Gastrocnemius medialis (tissue), 4 donors: ENCODE measurements at regions of chr12 and their contacts with region 1.

Region 1: DNA sequence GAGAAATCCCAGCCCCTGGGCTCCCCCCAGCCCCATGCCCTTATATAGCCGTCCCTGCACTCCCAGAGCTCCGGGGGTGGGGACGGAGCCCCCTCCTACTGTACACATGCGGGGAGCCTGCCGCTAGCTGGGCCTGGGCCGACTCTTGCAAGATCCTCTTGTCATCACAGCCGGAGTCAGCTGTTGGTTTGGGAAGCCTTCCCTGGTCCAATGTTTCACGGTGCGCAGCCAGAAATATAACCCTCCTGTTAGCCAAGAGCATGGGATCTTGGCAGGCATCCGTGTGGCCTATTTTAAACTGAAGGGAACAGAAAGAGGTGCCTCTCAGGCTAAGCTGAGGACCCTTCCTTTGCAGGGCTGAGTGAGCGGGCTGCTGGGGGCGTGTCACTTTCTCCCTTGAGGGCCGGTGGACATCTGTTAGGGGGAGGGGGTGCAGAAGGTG is 175.3 kb downstream of the TSPAN9 start:
- DNase-seq: peak; percentile 95 to 98
- ATAC-seq: peak; percentile 73 to 85
- H3K4me3 ChIP-seq: peak overlapping the region in 1 of 4 donors; percentile 19
- H3K27ac ChIP-seq: peak overlapping the region; percentile 90 to 97 (median 94)
- H3K4me1 ChIP-seq: peaks cover 78 to 88% of the 10 kb centered on the region in 2 donors
- H3K27me3 ChIP-seq: no peaks in the 10 kb centered on the region
- CTCF ChIP-seq: no peak
- POLR2A ChIP-seq: peak in 1 of 2 donors; percentile 45

Region 2: DNA sequence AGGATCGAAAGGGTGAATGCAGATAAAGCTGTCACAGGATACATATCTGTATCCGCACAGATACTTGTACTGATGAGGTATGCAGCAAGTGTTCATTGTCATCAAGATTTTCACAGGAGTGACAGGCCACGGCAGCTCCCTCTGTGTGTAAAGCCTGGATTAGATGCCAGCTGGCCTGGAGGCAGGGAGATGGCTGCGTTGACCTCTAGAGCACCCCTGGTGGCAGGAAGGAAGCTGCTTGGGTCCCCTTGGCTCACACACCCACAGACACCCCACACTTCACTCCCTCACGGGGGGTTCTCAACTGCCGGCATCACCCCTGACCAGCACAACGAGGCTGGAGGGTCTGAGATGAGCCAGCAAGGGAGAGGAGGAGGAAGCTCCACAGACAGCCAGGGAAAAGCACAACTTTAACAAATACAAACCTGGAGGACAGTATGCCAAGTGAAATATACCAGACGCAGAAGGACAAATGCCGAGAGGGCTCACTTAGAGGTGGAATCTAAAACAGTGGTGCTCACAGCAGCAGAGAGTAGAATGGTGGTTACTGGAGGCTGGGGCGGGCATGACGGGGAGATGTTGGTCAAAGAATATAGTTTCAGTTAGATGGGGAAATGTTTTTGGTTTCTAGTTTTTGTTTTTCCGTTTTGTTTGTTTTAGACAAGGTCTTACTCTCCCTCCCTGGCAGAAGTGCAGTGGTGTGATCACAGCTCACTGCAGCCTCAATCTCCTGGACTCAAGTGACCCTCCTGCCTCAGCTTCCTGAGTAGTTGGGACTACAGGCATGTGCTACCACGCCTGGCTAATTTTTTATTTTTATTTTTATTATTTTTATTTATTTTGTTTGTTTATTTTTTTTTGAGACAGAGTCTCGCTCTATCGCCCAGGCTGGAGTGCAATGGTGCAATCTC is 247.6 kb before region 1 on chr12:
- in situ Hi-C with region 1: no loop called
- intact Hi-C with region 1: loop called (anchors 5 kb)
- DNase-seq: peak in 1 of 2 donors; percentile 58
- ATAC-seq: no peak
- H3K4me3 ChIP-seq: no peak overlapping the region
- H3K27ac ChIP-seq: peak overlapping the region; percentile 95 to 99 (median 97)
- H3K4me1 ChIP-seq: peaks cover 50 to 60% of the 10 kb centered on the region in 2 donors
- H3K27me3 ChIP-seq: no peaks in the 10 kb centered on the region
- CTCF ChIP-seq: peak in 1 of 5 experiments; percentile 37
- POLR2A ChIP-seq: no peak

Region 3: GRCh38 chr12:3381059-3382047 is 128.9 kb after region 1 on chr12:
- in situ Hi-C with region 1: no loop called
- intact Hi-C with region 1: no loop called
- DNase-seq: no peak
- ATAC-seq: no peak
- H3K4me3 ChIP-seq: no peak overlapping the region
- H3K27ac ChIP-seq: no peak overlapping the region
- H3K4me1 ChIP-seq: peaks cover 0 to 3% of the 10 kb centered on the region in 2 donors
- H3K27me3 ChIP-seq: no peaks in the 10 kb centered on the region
- CTCF ChIP-seq: no peak
- POLR2A ChIP-seq: no peak